ENCODE measurements at regions of chr6 and their contacts with region 1.

Region 1: DNA sequence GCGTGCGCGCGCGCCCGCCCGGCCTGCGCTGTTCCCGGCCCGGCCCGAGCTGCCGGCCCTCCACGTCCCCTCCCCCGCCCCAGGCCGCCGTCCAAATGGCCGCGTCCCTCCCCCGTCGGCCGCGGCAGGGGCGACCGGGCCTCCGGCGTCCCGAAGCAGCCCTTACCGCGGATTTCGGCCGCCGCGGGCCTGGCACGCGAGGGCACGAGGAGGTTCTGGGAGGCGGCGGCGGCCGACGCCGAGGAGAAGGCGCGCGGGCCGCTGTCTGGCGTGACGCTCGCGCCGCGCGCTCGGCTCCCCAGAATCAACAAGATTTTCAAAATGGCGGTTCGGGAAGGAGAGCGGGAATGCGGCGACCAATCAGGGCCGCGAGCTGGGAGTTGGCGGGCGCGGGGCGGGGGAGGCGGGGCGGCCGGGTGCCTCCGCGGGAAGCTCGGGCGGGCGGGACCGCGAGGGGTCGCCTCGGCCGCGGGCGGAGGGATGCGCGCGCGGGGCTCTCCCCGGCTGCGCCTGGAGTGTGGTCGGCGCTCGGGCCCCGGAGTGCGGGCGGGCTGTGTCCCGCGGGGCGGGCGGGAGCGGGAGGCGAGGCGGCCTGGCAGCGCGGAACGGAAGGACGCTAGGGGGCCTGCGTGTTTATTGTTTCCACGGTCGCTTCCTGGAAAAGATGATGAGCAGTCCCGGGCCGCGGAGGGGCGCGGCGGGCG is at the start of gene DEK:
- DNase-seq: peak; percentile 59 to 90 (median 84)
- ATAC-seq: peak; percentile 66
- H3K4me3 ChIP-seq: peak within 1 kb of the TSS; percentile 67 to 79
- H3K4me3 Mint-ChIP-seq: peak within 1 kb of the TSS; percentile 90
- H3K27ac ChIP-seq: peak within 1 kb of the TSS; percentile 53 to 89
- H3K27ac Mint-ChIP-seq: peak within 1 kb of the TSS; percentile 95
- H3K4me1 ChIP-seq: peaks cover 33% of the 10 kb centered on the region
- H3K4me1 Mint-ChIP-seq: peaks cover 52% of the 10 kb centered on the region
- H3K27me3 ChIP-seq: no peaks in the 10 kb centered on the region
- H3K27me3 Mint-ChIP-seq: no peaks in the 10 kb centered on the region
- CTCF ChIP-seq: peak; percentile 45
- total RNA-seq, gene DEK: 39.5 to 47.5 TPM

Region 2: GRCh38 chr6:17706580-17707370 is 557.6 kb before region 1 on chr6 and contains the start of gene NUP153:
- CTCF ChIA-PET with region 1: no interaction called
- POLR2A ChIA-PET with region 1: no interaction called
- intact Hi-C with region 1: loop called (anchors 1 to 2 kb)
- DNase-seq: peak; percentile 98 to 100 (median 100)
- ATAC-seq: peak; percentile 77
- H3K4me3 ChIP-seq: peak within 1 kb of the TSS; percentile 84 to 96
- H3K4me3 Mint-ChIP-seq: peak within 1 kb of the TSS; percentile 88
- H3K27ac ChIP-seq: peak within 1 kb of the TSS; percentile 99
- H3K27ac Mint-ChIP-seq: peak within 1 kb of the TSS; percentile 96
- H3K4me1 ChIP-seq: peaks cover 39% of the 10 kb centered on the region
- H3K4me1 Mint-ChIP-seq: peaks cover 40% of the 10 kb centered on the region
- H3K27me3 ChIP-seq: no peaks in the 10 kb centered on the region
- H3K27me3 Mint-ChIP-seq: no peaks in the 10 kb centered on the region
- CTCF ChIP-seq: no peak
- total RNA-seq, gene NUP153: 76.4 to 77.7 TPM

Region 3: GRCh38 chr6:18016133-18016532 is 248.2 kb before region 1 on chr6:
- CTCF ChIA-PET with region 1: no interaction called
- POLR2A ChIA-PET with region 1: no interaction called
- intact Hi-C with region 1: no loop called
- DNase-seq: no peak
- ATAC-seq: no peak
- H3K4me3 ChIP-seq: no peak overlapping the region
- H3K4me3 Mint-ChIP-seq: no peak overlapping the region
- H3K27ac ChIP-seq: no peak overlapping the region
- H3K27ac Mint-ChIP-seq: no peak overlapping the region
- H3K4me1 ChIP-seq: no peaks in the 10 kb centered on the region
- H3K4me1 Mint-ChIP-seq: no peaks in the 10 kb centered on the region
- H3K27me3 ChIP-seq: no peaks in the 10 kb centered on the region
- H3K27me3 Mint-ChIP-seq: no peaks in the 10 kb centered on the region
- CTCF ChIP-seq: no peak

Region 4: GRCh38 chr6:18221288-18221615 is 43.1 kb before region 1 on chr6:
- CTCF ChIA-PET with region 1: no interaction called
- POLR2A ChIA-PET with region 1: no interaction called
- intact Hi-C with region 1: loop called in 1 of 2 experiments (anchors 5 kb)
- DNase-seq: no peak
- ATAC-seq: no peak
- H3K4me3 ChIP-seq: no peak overlapping the region
- H3K4me3 Mint-ChIP-seq: no peak overlapping the region
- H3K27ac ChIP-seq: no peak overlapping the region
- H3K27ac Mint-ChIP-seq: peak overlapping the region; percentile 37
- H3K4me1 ChIP-seq: no peaks in the 10 kb centered on the region
- H3K4me1 Mint-ChIP-seq: no peaks in the 10 kb centered on the region
- H3K27me3 ChIP-seq: no peaks in the 10 kb centered on the region
- H3K27me3 Mint-ChIP-seq: no peaks in the 10 kb centered on the region
- CTCF ChIP-seq: no peak

Region 5: GRCh38 chr6:18302561-18303439 is 38.4 kb after region 1 on chr6:
- CTCF ChIA-PET with region 1: no interaction called
- POLR2A ChIA-PET with region 1: no interaction called
- intact Hi-C with region 1: loop called in 1 of 2 experiments (anchors 2 kb)
- DNase-seq: peak in 2 of 9 experiments; percentile 12 to 26
- ATAC-seq: no peak
- H3K4me3 ChIP-seq: no peak overlapping the region
- H3K4me3 Mint-ChIP-seq: no peak overlapping the region
- H3K27ac ChIP-seq: no peak overlapping the region
- H3K27ac Mint-ChIP-seq: no peak overlapping the region
- H3K4me1 ChIP-seq: no peaks in the 10 kb centered on the region
- H3K4me1 Mint-ChIP-seq: no peaks in the 10 kb centered on the region
- H3K27me3 ChIP-seq: no peaks in the 10 kb centered on the region
- H3K27me3 Mint-ChIP-seq: no peaks in the 10 kb centered on the region
- CTCF ChIP-seq: no peak

Region 6: GRCh38 chr6:18387061-18387721 is 122.8 kb after region 1 on chr6 and contains the start of gene RNF144B:
- CTCF ChIA-PET with region 1: no interaction called
- POLR2A ChIA-PET with region 1: no interaction called
- intact Hi-C with region 1: loop called in 1 of 2 experiments (anchors 5 kb)
- DNase-seq: peak; percentile 19 to 85 (median 68)
- ATAC-seq: peak; percentile 90
- H3K4me3 ChIP-seq: peak within 1 kb of the TSS; percentile 62 to 76
- H3K4me3 Mint-ChIP-seq: peak within 1 kb of the TSS; percentile 100
- H3K27ac ChIP-seq: peak within 1 kb of the TSS; percentile 29 to 45
- H3K27ac Mint-ChIP-seq: peak within 1 kb of the TSS; percentile 93
- H3K4me1 ChIP-seq: peaks cover 13% of the 10 kb centered on the region
- H3K4me1 Mint-ChIP-seq: peaks cover 42% of the 10 kb centered on the region
- H3K27me3 ChIP-seq: no peaks in the 10 kb centered on the region
- H3K27me3 Mint-ChIP-seq: no peaks in the 10 kb centered on the region
- CTCF ChIP-seq: no peak
- total RNA-seq, gene RNF144B: 1.3 to 2.0 TPM

Measured in CD8-positive, alpha-beta T cell (primary cell).